Lower leg skin (tissue), 4 donors: ENCODE measurements at regions of chr2 and their contacts with region 1.

Region 1: DNA sequence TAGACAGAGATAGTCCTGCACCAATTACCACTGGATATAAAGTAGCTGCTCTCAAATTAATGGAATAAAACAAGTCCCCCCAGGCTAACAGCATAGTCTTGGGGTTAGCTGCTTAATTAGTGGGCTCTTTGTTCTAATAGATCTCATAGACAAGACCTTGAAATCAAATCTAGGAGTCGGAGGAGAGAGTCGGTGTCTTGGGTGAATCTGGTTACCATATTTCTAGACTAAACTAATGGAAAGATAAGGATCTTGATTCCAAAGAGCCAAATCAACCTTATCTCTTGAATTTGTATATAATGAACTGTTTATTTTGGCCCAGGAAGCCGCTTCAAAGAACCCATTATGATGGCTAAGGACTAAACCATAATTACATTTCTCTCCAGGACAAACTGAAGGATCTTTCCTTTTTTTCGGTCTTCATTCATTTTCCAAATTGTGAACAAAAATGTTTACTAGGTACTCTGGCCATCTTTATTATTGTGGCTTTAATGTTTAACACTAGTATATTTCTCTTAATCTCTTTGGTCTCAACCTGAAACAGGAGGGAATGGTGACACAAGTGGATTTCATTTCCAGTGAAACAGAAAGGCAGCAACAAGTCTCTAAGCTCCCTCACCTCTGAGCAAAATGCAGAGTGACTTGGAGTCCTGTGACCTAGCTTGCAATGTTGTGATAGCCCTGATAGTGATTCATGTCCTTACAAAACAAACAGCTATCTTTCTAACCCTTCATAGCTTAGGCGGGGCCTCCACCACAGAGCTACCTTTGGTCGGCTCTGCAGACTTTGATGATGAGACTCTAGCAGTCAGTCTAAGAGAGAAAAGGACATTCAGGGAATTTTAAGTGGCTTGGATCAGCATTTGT is 137.8 kb upstream of the PARD3B start:
- DNase-seq: no peak
- H3K4me3 ChIP-seq: no peak overlapping the region
- CTCF ChIP-seq: no peak
- POLR2A ChIP-seq: no peak

Region 2: GRCh38 chr2:205785507-205786260 is 1378.2 kb after region 1 on chr2:
- intact Hi-C with region 1: loop called (anchors 5 kb)
- DNase-seq: no peak
- H3K4me3 ChIP-seq: no peak overlapping the region
- CTCF ChIP-seq: no peak
- POLR2A ChIP-seq: no peak